HepG2 (cell line): ENCODE measurements at regions of chr16 and their contacts with region 1.

Region 1: DNA sequence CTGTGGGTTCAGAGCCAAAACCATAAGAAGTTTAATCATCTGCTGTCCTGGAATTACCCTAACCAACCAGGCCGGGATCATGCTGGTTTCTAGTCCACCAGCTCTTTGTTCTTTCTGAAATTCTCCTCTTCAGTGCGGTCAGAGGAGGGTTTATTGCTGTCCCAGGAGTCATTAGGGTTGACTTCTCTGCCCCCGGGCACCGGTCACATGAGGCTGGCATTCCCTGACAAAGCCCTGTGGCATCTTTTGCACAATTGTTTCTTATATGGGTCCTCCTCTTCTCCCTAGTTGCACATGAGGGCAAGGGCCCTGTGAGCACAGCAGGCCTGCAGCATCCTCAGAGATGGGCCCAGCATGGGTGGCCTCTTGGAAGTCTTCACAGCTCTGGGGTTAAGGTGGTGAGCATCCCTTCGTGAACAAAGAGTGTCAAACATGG is 243.9 kb downstream of the IRF8 start:
- DNase-seq: no peak
- ATAC-seq: no peak
- H3K4me3 ChIP-seq: no peak overlapping the region
- H3K27ac ChIP-seq: no peak overlapping the region
- H3K4me1 ChIP-seq: no peaks in the 10 kb centered on the region
- H3K27me3 ChIP-seq: peaks cover 0 to 14% of the 10 kb centered on the region in 2 experiments; a peak in 1 of 5 replicates
- CTCF ChIP-seq: no peak
- EP300 ChIP-seq: no peak
- POLR2A ChIP-seq: no peak
- RAD21 ChIP-seq: no peak

Region 2: GRCh38 chr16:86181526-86181925 is 38.7 kb after region 1 on chr16:
- CTCF ChIA-PET with region 1: no interaction called
- POLR2A ChIA-PET with region 1: no interaction called
- in situ Hi-C with region 1: no loop called
- intact Hi-C with region 1: no loop called
- DNase-seq: no peak
- ATAC-seq: no peak
- H3K4me3 ChIP-seq: no peak overlapping the region
- H3K27ac ChIP-seq: no peak overlapping the region
- H3K4me1 ChIP-seq: no peaks in the 10 kb centered on the region
- H3K27me3 ChIP-seq: peaks cover 0 to 21% of the 10 kb centered on the region in 2 experiments; a peak in 3 of 5 replicates
- CTCF ChIP-seq: no peak
- EP300 ChIP-seq: no peak
- POLR2A ChIP-seq: no peak
- RAD21 ChIP-seq: no peak

Region 3: GRCh38 chr16:86193495-86194176 is 50.8 kb after region 1 on chr16:
- CTCF ChIA-PET with region 1: no interaction called
- POLR2A ChIA-PET with region 1: no interaction called
- in situ Hi-C with region 1: no loop called
- intact Hi-C with region 1: no loop called
- DNase-seq: no peak
- ATAC-seq: no peak; the same call in 2 of the 3 replicates
- H3K4me3 ChIP-seq: no peak overlapping the region
- H3K27ac ChIP-seq: no peak overlapping the region
- H3K4me1 ChIP-seq: no peaks in the 10 kb centered on the region
- H3K27me3 ChIP-seq: peaks cover 6 to 80% of the 10 kb centered on the region in 2 experiments
- CTCF ChIP-seq: no peak
- EP300 ChIP-seq: no peak
- POLR2A ChIP-seq: no peak
- RAD21 ChIP-seq: no peak

Region 4: DNA sequence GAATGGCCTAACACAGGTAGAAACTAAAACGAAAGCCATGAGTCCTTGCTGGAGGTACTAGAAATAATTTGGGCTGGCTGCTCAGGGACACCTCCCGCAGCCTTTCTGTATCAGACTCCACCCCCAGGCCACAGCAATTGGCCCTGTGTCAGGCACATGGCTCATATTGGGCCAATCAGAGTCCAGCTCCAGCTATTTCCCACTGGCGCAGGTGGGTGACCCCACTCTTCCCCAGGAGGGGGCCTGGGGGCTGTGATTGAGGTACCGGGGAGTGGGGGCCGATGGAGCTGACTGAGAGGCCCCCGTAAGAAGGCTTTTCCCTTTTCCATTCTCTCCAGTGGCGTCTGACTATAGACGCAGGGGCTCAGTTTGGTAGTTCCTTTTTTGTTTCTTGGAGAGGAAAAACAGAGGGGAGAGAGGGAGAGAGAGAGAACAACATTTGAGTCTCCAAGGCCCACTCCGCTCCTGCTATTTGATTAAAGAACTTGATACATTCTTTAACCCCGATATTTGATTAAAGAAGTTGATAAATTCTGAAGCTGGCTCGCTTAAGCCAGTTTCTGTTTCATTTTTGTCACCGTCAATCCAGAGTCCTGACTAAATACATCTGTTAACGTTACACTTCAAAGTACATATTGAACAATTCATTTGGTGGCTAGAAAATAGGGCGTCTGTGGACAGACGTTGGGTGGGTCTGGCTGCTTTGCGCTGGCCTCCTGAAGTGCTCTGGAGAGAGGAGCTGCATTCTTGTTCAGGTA is 461.8 kb after region 1 on chr16:
- CTCF ChIA-PET with region 1: no interaction called
- POLR2A ChIA-PET with region 1: no interaction called
- in situ Hi-C with region 1: no loop called
- intact Hi-C with region 1: loop called (anchors 5 kb)
- DNase-seq: no peak
- ATAC-seq: peak; percentile 33; the same call in 2 of the 3 replicates
- H3K4me3 ChIP-seq: no peak overlapping the region
- H3K27ac ChIP-seq: no peak overlapping the region
- H3K4me1 ChIP-seq: no peaks in the 10 kb centered on the region
- H3K27me3 ChIP-seq: peaks cover 0 to 17% of the 10 kb centered on the region in 2 experiments; a peak in 1 of 5 replicates
- CTCF ChIP-seq: no peak
- EP300 ChIP-seq: no peak
- POLR2A ChIP-seq: no peak
- RAD21 ChIP-seq: no peak